SK-N-SH (cell line): ENCODE measurements at regions of chr2 and their contacts with region 1.

Region 1: DNA sequence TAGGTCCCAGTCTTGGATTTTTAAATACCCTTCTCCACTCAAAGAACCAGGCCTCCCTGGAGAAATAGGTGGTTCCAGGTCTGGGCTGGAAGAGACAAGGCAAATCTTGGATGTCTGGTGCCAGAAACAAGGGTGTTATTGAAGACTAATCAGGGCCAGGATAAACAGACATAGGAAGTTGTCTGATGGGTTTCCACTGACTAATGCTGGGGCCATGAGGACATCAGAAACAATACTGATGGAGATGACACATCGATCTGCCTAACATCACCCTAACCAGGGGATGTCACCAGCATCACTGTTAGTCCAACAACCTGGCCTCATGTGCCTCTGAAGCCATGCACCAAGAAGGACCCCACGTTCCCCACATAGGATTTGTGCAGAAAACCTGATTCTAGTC is 42.5 kb upstream of the GLI2 start:
- DNase-seq: no peak
- H3K4me3 ChIP-seq: no peak overlapping the region
- H3K27ac ChIP-seq: no peak overlapping the region
- H3K4me1 ChIP-seq: peaks cover 0 to 2% of the 10 kb centered on the region in 2 experiments; a peak in 1 of 4 replicates
- H3K27me3 ChIP-seq: no peaks in the 10 kb centered on the region; the same call in 1 of the 2 replicates
- CTCF ChIP-seq: no peak
- EP300 ChIP-seq: no peak
- RAD21 ChIP-seq: no peak

Region 2: GRCh38 chr2:120641366-120641771 is 51.8 kb before region 1 on chr2:
- CTCF ChIA-PET with region 1: no interaction called
- POLR2A ChIA-PET with region 1: no interaction called
- DNase-seq: no peak
- H3K4me3 ChIP-seq: no peak overlapping the region
- H3K27ac ChIP-seq: no peak overlapping the region
- H3K4me1 ChIP-seq: no peaks in the 10 kb centered on the region
- H3K27me3 ChIP-seq: peaks cover 24% of the 10 kb centered on the region; the same call in 1 of the 2 replicates
- CTCF ChIP-seq: no peak
- EP300 ChIP-seq: no peak
- RAD21 ChIP-seq: no peak

Region 3: DNA sequence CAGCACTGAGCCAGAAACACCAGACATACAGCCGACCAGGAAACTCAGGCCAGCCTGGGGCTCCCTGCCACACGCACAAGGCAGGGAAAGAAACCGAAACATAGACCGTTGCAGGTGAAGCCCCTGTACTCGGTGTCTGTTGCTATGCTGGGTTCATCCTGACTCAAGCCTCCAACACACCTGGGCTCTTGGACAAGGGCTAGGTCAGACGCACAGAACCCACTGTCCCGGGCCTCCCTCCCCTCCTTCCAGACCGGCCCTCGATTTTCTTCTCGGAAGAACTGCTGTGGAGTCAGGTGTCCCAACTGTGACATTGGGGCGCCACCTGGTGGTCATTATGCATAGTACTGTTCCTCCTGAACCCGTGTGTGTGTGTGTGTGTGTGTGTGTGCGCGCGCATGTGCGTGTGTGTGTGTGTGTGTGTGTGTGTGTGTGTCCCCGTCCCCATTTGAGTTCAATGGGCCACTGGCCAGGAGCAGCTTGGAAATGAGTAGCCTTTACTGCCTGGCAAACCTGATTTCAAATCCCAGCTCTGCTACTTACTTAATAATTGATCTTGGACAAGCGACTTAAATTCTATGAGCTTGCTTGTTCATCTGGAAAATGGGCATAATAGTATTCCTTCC is 12.9 kb before region 1 on chr2:
- CTCF ChIA-PET with region 1: interaction called, 17 read pairs
- POLR2A ChIA-PET with region 1: no interaction called
- DNase-seq: peak; percentile 83
- H3K4me3 ChIP-seq: peak overlapping the region in 1 of 2 experiments; percentile 24; a peak in 1 of 4 replicates
- H3K27ac ChIP-seq: no peak overlapping the region
- H3K4me1 ChIP-seq: peaks cover 0 to 10% of the 10 kb centered on the region in 2 experiments; a peak in 2 of 4 replicates
- H3K27me3 ChIP-seq: peaks cover 14% of the 10 kb centered on the region; the same call in 1 of the 2 replicates
- CTCF ChIP-seq: peak; percentile 58
- EP300 ChIP-seq: no peak
- RAD21 ChIP-seq: peak; percentile 86

Region 4: GRCh38 chr2:120722568-120723421 is 29.7 kb after region 1 on chr2:
- CTCF ChIA-PET with region 1: interaction called, 12 read pairs
- POLR2A ChIA-PET with region 1: no interaction called
- DNase-seq: no peak
- H3K4me3 ChIP-seq: peak overlapping the region in 1 of 2 experiments; percentile 3; a peak in 1 of 4 replicates
- H3K27ac ChIP-seq: peak overlapping the region in 1 of 2 experiments; percentile 79; a peak in 2 of 4 replicates
- H3K4me1 ChIP-seq: peaks cover 12 to 24% of the 10 kb centered on the region in 2 experiments; a peak in 2 of 4 replicates
- H3K27me3 ChIP-seq: no peaks in the 10 kb centered on the region
- CTCF ChIP-seq: no peak
- EP300 ChIP-seq: no peak
- RAD21 ChIP-seq: no peak

Region 5: GRCh38 chr2:120898961-120899750 is 206.0 kb after region 1 on chr2:
- CTCF ChIA-PET with region 1: interaction called, 10 read pairs
- POLR2A ChIA-PET with region 1: no interaction called
- DNase-seq: no peak
- H3K4me3 ChIP-seq: no peak overlapping the region
- H3K27ac ChIP-seq: peak overlapping the region in 1 of 2 experiments; percentile 97; a peak in 1 of 4 replicates
- H3K4me1 ChIP-seq: peaks cover 0 to 58% of the 10 kb centered on the region in 2 experiments; a peak in 2 of 4 replicates
- H3K27me3 ChIP-seq: no peaks in the 10 kb centered on the region
- CTCF ChIP-seq: no peak
- EP300 ChIP-seq: no peak
- RAD21 ChIP-seq: no peak

Region 6: GRCh38 chr2:120958623-120959366 is 265.7 kb after region 1 on chr2:
- CTCF ChIA-PET with region 1: interaction called, 10 read pairs
- POLR2A ChIA-PET with region 1: no interaction called
- DNase-seq: peak; percentile 66
- H3K4me3 ChIP-seq: no peak overlapping the region
- H3K27ac ChIP-seq: peak overlapping the region in 1 of 2 experiments; percentile 36; a peak in 1 of 4 replicates
- H3K4me1 ChIP-seq: peaks cover 0 to 44% of the 10 kb centered on the region in 2 experiments; a peak in 1 of 4 replicates
- H3K27me3 ChIP-seq: no peaks in the 10 kb centered on the region
- CTCF ChIP-seq: peak; percentile 52
- EP300 ChIP-seq: no peak
- RAD21 ChIP-seq: peak; percentile 37; the same call in 1 of the 2 replicates

Region 7: GRCh38 chr2:121095257-121096080 is 402.3 kb after region 1 on chr2:
- CTCF ChIA-PET with region 1: interaction called, 17 read pairs
- POLR2A ChIA-PET with region 1: no interaction called
- DNase-seq: peak; percentile 85
- H3K4me3 ChIP-seq: no peak overlapping the region
- H3K27ac ChIP-seq: no peak overlapping the region
- H3K4me1 ChIP-seq: peaks cover 0 to 8% of the 10 kb centered on the region in 2 experiments; a peak in 2 of 4 replicates
- H3K27me3 ChIP-seq: peaks cover 15% of the 10 kb centered on the region
- CTCF ChIP-seq: peak; percentile 67
- EP300 ChIP-seq: no peak
- RAD21 ChIP-seq: peak; percentile 84

Region 8: GRCh38 chr2:121197369-121198091 is 504.4 kb after region 1 on chr2:
- CTCF ChIA-PET with region 1: no interaction called
- POLR2A ChIA-PET with region 1: no interaction called
- DNase-seq: no peak
- H3K4me3 ChIP-seq: no peak overlapping the region
- H3K27ac ChIP-seq: no peak overlapping the region
- H3K4me1 ChIP-seq: peaks cover 0 to 7% of the 10 kb centered on the region in 2 experiments; a peak in 1 of 4 replicates
- H3K27me3 ChIP-seq: no peaks in the 10 kb centered on the region
- CTCF ChIP-seq: no peak
- EP300 ChIP-seq: no peak
- RAD21 ChIP-seq: no peak